ENCODE measurements at regions of chr20 and their contacts with region 1.

Region 1: DNA sequence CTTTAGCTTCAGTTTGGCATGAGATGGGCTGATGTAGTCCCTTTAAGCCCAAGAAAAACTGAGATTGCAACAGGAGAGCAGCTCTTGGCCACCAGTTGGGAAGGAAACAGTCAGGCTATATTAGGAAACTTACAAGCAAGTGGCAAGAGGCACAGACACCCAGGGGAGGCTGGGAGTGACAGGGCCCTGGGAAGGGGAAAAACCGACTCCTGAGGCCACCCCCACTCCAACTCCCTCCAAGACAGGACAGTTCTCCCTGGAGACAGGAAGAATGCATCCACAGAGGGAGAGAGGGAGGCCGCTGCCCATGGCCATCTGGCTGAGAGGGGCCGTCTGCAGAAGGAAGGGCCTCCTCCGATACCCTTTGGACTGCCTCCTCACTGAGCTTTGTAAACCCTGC is 20.5 kb downstream of the JPH2 start:
- DNase-seq: peak; percentile 57 to 82
- H3K4me3 ChIP-seq: peak overlapping the region; percentile 11; the same call in 1 of the 2 replicates
- H3K27ac ChIP-seq: peak overlapping the region; percentile 90
- H3K4me1 ChIP-seq: peaks cover 75% of the 10 kb centered on the region
- H3K27me3 ChIP-seq: no peaks in the 10 kb centered on the region
- CTCF ChIP-seq: no peak

Region 2: DNA sequence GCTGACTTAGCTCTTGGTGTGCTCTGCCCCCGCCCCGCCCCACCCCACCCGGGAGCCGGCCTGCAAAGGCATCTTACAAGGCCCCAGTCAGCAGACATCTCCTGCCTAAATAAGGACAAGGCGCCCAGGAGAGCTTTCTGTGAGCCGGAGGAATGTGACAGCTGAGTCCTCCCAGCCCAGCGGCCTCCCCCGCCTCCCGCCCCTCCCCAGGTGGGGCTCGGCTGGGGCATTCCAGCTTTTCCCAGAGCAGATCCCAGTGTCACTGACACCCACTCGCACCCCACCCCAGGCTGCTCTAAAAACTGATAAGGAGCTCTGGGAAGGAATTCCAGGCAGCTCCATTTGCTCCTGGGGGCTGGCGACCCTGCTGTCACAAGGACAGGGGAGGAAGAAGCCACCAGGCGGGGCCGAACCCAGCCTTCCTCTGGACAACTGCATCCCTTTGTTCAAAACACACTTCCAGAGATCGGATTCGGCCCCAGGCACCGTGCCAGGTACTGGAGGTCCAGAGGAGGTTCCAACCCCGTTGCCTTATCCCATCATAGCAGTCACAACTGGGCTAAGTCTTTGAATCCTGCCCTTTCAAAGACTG is 29.2 kb before region 1 on chr20:
- CTCF ChIA-PET with region 1: no interaction called
- POLR2A ChIA-PET with region 1: interaction called, 12 read pairs
- intact Hi-C with region 1: no loop called
- DNase-seq: peak in 1 of 2 experiments; percentile 34
- H3K4me3 ChIP-seq: no peak overlapping the region
- H3K27ac ChIP-seq: no peak overlapping the region
- H3K4me1 ChIP-seq: no peaks in the 10 kb centered on the region
- H3K27me3 ChIP-seq: no peaks in the 10 kb centered on the region
- CTCF ChIP-seq: no peak

Region 3: GRCh38 chr20:44176833-44177534 is 10.5 kb after region 1 on chr20:
- CTCF ChIA-PET with region 1: interaction called, 6 read pairs
- POLR2A ChIA-PET with region 1: interaction called, 12 read pairs
- intact Hi-C with region 1: loop called (anchors 1 kb)
- DNase-seq: peak; percentile 92 to 93
- H3K4me3 ChIP-seq: peak overlapping the region; percentile 41
- H3K27ac ChIP-seq: peak overlapping the region; percentile 99
- H3K4me1 ChIP-seq: peaks cover 84% of the 10 kb centered on the region
- H3K27me3 ChIP-seq: no peaks in the 10 kb centered on the region
- CTCF ChIP-seq: no peak